CD8-positive, alpha-beta T cell (primary cell): ENCODE measurements at regions of chr1 and their contacts with region 1.

Region 1: GRCh38 chr1:13667691-13668090 is 32.3 kb upstream of the PRDM2 start:
- DNase-seq: no peak
- ATAC-seq: no peak
- H3K4me3 ChIP-seq: no peak overlapping the region
- H3K4me3 Mint-ChIP-seq: no peak overlapping the region
- H3K27ac ChIP-seq: no peak overlapping the region
- H3K27ac Mint-ChIP-seq: no peak overlapping the region
- H3K4me1 ChIP-seq: peaks cover 4% of the 10 kb centered on the region
- H3K4me1 Mint-ChIP-seq: peaks cover 5% of the 10 kb centered on the region
- H3K27me3 ChIP-seq: no peaks in the 10 kb centered on the region
- H3K27me3 Mint-ChIP-seq: no peaks in the 10 kb centered on the region
- CTCF ChIP-seq: no peak

Region 2: GRCh38 chr1:13764588-13765332 is 97.1 kb after region 1 on chr1:
- CTCF ChIA-PET with region 1: interaction called, 5 read pairs
- POLR2A ChIA-PET with region 1: no interaction called
- intact Hi-C with region 1: loop called in 1 of 2 experiments (anchors 5 kb)
- DNase-seq: peak in 6 of 9 experiments; percentile 13 to 70 (median 36)
- ATAC-seq: peak; percentile 29
- H3K4me3 ChIP-seq: no peak overlapping the region
- H3K4me3 Mint-ChIP-seq: no peak overlapping the region
- H3K27ac ChIP-seq: no peak overlapping the region
- H3K27ac Mint-ChIP-seq: peak overlapping the region; percentile 43
- H3K4me1 ChIP-seq: peaks cover 59% of the 10 kb centered on the region
- H3K4me1 Mint-ChIP-seq: peaks cover 85% of the 10 kb centered on the region
- H3K27me3 ChIP-seq: no peaks in the 10 kb centered on the region
- H3K27me3 Mint-ChIP-seq: no peaks in the 10 kb centered on the region
- CTCF ChIP-seq: no peak